ENCODE measurements at regions of chr6 and their contacts with region 1.

Region 1: DNA sequence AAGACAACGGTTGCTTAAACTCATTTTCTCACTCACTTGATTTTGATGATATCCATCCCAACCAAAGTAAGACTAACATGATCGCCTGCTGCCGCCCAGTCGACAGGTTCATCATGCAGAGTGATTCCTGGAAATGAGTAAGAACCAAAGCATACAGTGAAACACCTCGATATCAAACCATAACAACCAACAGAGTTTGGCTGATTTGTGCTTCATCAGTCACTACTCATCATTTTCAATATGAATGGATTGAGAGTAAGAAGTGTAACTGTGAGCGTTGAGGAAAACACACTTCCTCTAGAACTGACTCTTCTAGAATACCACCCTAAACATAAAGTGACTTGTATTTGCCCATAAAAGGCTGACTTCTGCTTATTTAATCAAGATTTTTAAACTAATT is 29.2 kb upstream of the ALDH8A1 start:
- DNase-seq: peak; percentile 75
- ATAC-seq: peak; percentile 92
- H3K4me3 Mint-ChIP-seq: no peak overlapping the region
- H3K27ac Mint-ChIP-seq: peak overlapping the region; percentile 39
- H3K4me1 Mint-ChIP-seq: peaks cover 48% of the 10 kb centered on the region
- H3K27me3 Mint-ChIP-seq: no peaks in the 10 kb centered on the region

Region 2: DNA sequence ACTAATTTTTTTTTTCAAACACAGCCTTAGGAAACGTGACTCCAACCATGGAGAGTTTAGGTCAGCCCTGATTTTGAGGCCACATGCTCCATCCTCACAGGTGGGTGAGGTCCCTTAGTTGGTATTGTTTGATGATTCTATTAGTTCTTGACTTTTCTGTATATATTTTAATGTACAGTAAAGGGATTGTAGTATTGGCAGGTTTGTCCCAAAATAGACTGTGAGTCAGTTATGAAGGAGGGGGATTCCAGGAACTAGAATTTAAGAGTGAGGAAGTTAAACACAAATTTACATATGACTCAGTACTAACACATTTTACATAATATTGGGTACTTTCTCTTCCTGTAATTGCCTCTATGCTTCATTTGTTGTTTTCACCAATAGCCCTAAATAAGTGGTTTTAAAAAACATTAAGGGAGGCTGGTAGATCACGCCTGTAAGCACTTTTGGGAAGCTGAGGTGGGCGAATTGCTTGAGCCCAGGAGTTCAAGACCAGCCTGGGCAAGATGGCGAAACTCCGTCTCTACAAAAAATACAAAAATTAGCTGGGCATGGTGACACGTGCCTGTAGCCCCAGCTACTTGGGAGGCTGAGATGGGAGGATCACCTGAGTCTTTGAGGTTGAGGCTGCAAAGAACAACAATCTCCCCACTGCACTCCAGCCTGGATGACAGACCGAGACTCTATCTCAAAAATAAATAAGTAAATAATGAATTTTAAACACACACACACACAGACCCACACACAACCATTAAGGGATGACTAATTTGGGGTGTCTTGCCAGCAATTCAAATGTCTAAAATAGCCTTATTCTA is 743.0 kb before region 1 on chr6:
- CTCF ChIA-PET with region 1: no interaction called
- POLR2A ChIA-PET with region 1: no interaction called
- intact Hi-C with region 1: loop called in 1 of 2 experiments (anchors 5 kb)
- DNase-seq: peak; percentile 25
- ATAC-seq: peak; percentile 83
- H3K4me3 Mint-ChIP-seq: peak overlapping the region; percentile 35
- H3K27ac Mint-ChIP-seq: peak overlapping the region; percentile 77
- H3K4me1 Mint-ChIP-seq: peaks cover 41% of the 10 kb centered on the region
- H3K27me3 Mint-ChIP-seq: no peaks in the 10 kb centered on the region

Region 3: GRCh38 chr6:135002229-135002844 is 23.2 kb after region 1 on chr6:
- CTCF ChIA-PET with region 1: no interaction called
- POLR2A ChIA-PET with region 1: no interaction called
- intact Hi-C with region 1: loop called in 1 of 2 experiments (anchors 2 kb)
- DNase-seq: no peak
- ATAC-seq: no peak
- H3K4me3 Mint-ChIP-seq: no peak overlapping the region
- H3K27ac Mint-ChIP-seq: no peak overlapping the region
- H3K4me1 Mint-ChIP-seq: peaks cover 18% of the 10 kb centered on the region
- H3K27me3 Mint-ChIP-seq: no peaks in the 10 kb centered on the region

Region 4: GRCh38 chr6:135014353-135014832 is 35.3 kb after region 1 on chr6:
- CTCF ChIA-PET with region 1: no interaction called
- POLR2A ChIA-PET with region 1: no interaction called
- intact Hi-C with region 1: loop called (anchors 1 kb)
- DNase-seq: peak; percentile 23
- ATAC-seq: peak; percentile 87
- H3K4me3 Mint-ChIP-seq: peak overlapping the region; percentile 18
- H3K27ac Mint-ChIP-seq: peak overlapping the region; percentile 45
- H3K4me1 Mint-ChIP-seq: peaks cover 59% of the 10 kb centered on the region
- H3K27me3 Mint-ChIP-seq: no peaks in the 10 kb centered on the region

Region 5: GRCh38 chr6:135030056-135030473 is 50.9 kb after region 1 on chr6:
- CTCF ChIA-PET with region 1: no interaction called
- POLR2A ChIA-PET with region 1: no interaction called
- intact Hi-C with region 1: loop called (anchors 1 kb)
- DNase-seq: no peak
- ATAC-seq: peak; percentile 97
- H3K4me3 Mint-ChIP-seq: peak overlapping the region; percentile 54
- H3K27ac Mint-ChIP-seq: peak overlapping the region; percentile 75
- H3K4me1 Mint-ChIP-seq: peaks cover 69% of the 10 kb centered on the region
- H3K27me3 Mint-ChIP-seq: no peaks in the 10 kb centered on the region

Region 6: GRCh38 chr6:135054569-135055498 is 75.7 kb after region 1 on chr6 and contains the start of gene HBS1L:
- CTCF ChIA-PET with region 1: no interaction called
- POLR2A ChIA-PET with region 1: no interaction called
- intact Hi-C with region 1: loop called (anchors 1 to 2 kb)
- DNase-seq: peak; percentile 99
- ATAC-seq: peak; percentile 96
- H3K4me3 Mint-ChIP-seq: peak within 1 kb of the TSS; percentile 94
- H3K27ac Mint-ChIP-seq: peak within 1 kb of the TSS; percentile 96
- H3K4me1 Mint-ChIP-seq: peaks cover 22% of the 10 kb centered on the region
- H3K27me3 Mint-ChIP-seq: no peaks in the 10 kb centered on the region
- total RNA-seq, gene HBS1L: 133 to 141 TPM

Region 7: DNA sequence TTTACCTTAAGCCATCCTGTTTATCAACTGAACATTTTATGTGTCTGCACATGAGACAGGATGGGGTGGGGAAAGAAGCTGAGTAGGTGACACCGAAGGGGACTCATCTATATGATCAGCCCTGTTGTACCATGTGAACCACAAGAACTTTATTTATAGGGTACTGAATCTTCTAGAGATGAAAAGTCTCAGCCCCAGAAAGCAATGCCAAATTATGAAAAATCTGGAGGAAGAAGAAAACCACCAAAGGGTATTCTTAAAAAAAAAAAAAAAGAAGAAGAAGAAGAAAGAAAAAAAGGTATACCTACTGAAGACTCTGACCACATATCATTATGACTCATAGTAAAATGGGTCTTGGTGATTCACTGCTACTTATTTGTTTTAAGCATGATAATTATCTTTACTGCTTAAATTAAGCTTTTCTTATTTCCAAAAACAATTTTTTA is 115.3 kb after region 1 on chr6:
- CTCF ChIA-PET with region 1: no interaction called
- POLR2A ChIA-PET with region 1: no interaction called
- intact Hi-C with region 1: loop called (anchors 1 to 2 kb)
- DNase-seq: peak; percentile 56
- ATAC-seq: peak; percentile 89
- H3K4me3 Mint-ChIP-seq: no peak overlapping the region
- H3K27ac Mint-ChIP-seq: peak overlapping the region; percentile 79
- H3K4me1 Mint-ChIP-seq: peaks cover 57% of the 10 kb centered on the region
- H3K27me3 Mint-ChIP-seq: no peaks in the 10 kb centered on the region

Region 8: DNA sequence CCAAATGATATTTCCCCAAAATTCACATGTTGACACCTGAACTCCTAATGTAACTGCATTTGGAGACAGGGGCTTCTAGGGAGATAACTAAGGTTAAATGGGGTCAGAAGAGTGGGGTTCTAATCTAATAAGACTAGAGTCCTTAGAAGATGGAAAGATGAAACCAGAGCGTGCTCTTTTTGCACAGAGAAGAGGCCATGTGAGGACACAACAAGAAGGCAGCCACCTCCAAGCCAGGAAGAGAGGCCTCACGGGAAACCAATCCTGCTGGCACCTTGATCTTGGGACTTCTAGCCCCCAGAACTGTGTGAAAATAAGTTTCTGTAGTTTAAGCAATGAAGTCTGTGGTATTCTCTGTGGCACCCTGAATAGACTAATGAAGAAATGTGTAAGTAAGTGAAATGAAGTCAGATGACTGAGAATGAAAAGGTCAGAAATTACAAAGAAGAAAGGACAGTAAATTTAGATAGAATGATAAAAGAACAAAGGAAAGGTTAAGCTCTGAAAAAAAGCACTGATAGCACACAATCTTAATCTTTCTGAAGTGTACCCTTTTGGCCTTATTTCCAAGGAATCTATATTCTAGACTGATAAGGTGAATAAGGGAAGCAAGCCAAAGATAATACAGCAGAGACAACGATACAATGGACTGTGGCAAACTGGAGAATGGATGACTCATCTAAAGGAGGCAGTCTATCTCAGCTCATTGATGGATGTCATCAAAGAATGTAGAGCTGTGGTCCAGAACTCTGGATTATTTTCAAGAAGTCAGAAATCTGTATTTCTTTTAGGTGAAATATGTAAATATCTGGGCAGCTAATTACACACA is 312.4 kb after region 1 on chr6:
- CTCF ChIA-PET with region 1: no interaction called
- POLR2A ChIA-PET with region 1: no interaction called
- intact Hi-C with region 1: no loop called
- DNase-seq: no peak
- ATAC-seq: peak; percentile 64
- H3K4me3 Mint-ChIP-seq: no peak overlapping the region
- H3K27ac Mint-ChIP-seq: no peak overlapping the region
- H3K4me1 Mint-ChIP-seq: peaks cover 8% of the 10 kb centered on the region
- H3K27me3 Mint-ChIP-seq: no peaks in the 10 kb centered on the region

Measured in activated CD4-positive, alpha-beta T cell treated with anti-CD3 and anti-CD28 coated beads for 36 hours (primary cell).